Activated naive CD4-positive, alpha-beta T cell treated with anti-CD3 and anti-CD28 coated beads for 36 hours (primary cell): ENCODE measurements at regions of chr1 and their contacts with region 1.

Region 1: GRCh38 chr1:199089393-199090122 is 450.7 kb downstream of the PTPRC start:
- DNase-seq: peak; percentile 58
- H3K4me3 Mint-ChIP-seq: no peak overlapping the region
- H3K27ac Mint-ChIP-seq: no peak overlapping the region
- H3K4me1 Mint-ChIP-seq: peaks cover 14% of the 10 kb centered on the region
- H3K27me3 Mint-ChIP-seq: no peaks in the 10 kb centered on the region

Region 2: DNA sequence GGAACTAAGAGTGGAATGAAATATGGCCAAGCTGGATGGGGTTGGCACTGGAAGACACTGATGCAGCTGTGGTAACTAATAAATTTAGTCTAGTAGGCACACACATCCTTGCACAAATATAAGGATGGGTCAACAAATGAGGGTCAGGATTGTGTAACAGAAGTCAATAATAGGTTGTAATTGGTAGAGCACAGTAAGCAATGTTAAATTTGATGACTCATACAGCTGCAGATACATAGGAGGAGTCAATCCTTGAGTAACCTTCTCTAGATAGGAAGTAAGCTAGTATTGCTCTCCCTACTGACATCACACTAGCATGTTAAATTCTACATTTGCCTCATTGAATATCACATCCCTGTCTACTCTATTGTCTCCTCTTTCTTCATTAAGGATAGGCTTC is 118.6 kb before region 1 on chr1:
- CTCF ChIA-PET with region 1: no interaction called
- intact Hi-C with region 1: no loop called
- DNase-seq: no peak
- H3K4me3 Mint-ChIP-seq: no peak overlapping the region
- H3K27ac Mint-ChIP-seq: no peak overlapping the region
- H3K4me1 Mint-ChIP-seq: peaks cover 24% of the 10 kb centered on the region
- H3K27me3 Mint-ChIP-seq: no peaks in the 10 kb centered on the region

Region 3: DNA sequence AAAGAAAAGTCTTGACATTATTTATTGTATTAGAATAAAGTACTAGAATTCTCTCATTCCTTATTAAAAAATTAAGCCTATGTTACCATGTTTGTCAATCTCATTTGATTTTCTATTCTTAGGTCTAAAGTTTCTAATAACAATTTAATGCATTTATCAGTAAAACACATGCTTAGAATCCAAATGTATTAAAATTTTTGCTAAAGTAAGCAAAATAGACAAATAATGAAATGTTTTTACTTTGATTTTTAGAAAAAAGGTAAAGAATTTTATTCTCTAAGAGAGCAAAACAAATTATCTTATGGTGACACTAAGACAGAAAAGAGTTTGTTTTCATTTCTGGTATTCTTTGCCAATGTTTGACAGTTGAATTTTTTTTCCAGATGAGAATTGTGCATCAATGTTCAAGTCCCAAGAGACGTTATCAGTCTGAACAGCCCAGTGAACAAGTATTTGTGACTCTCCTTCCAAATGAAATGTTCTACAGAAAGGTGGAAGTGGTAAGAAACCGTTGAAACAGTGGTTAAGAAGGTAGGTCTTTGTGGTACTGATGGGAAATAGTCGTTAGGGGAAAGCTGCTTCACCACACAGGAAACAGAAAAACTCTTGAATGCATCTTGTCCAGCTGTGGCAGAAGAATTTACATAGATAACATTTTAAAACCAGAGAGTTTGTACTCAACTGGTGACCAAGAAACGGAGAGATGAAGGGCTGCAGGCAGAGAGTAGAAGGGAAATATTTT is 48.2 kb before region 1 on chr1:
- CTCF ChIA-PET with region 1: no interaction called
- intact Hi-C with region 1: loop called (anchors 2 kb)
- DNase-seq: peak; percentile 34
- H3K4me3 Mint-ChIP-seq: peak overlapping the region; percentile 10
- H3K27ac Mint-ChIP-seq: peak overlapping the region; percentile 38
- H3K4me1 Mint-ChIP-seq: peaks cover 20% of the 10 kb centered on the region
- H3K27me3 Mint-ChIP-seq: no peaks in the 10 kb centered on the region

Region 4: GRCh38 chr1:199102239-199102638 is 12.7 kb after region 1 on chr1:
- CTCF ChIA-PET with region 1: no interaction called
- intact Hi-C with region 1: loop called (anchors 1 kb)
- DNase-seq: peak; percentile 14
- H3K4me3 Mint-ChIP-seq: no peak overlapping the region
- H3K27ac Mint-ChIP-seq: no peak overlapping the region
- H3K4me1 Mint-ChIP-seq: peaks cover 4% of the 10 kb centered on the region
- H3K27me3 Mint-ChIP-seq: no peaks in the 10 kb centered on the region

Region 5: GRCh38 chr1:199574950-199575349 is 485.4 kb after region 1 on chr1:
- CTCF ChIA-PET with region 1: no interaction called
- intact Hi-C with region 1: no loop called
- DNase-seq: no peak
- H3K4me3 Mint-ChIP-seq: no peak overlapping the region
- H3K27ac Mint-ChIP-seq: no peak overlapping the region
- H3K4me1 Mint-ChIP-seq: no peaks in the 10 kb centered on the region
- H3K27me3 Mint-ChIP-seq: peaks cover 4% of the 10 kb centered on the region